Activated T-helper 1 cell treated with anti-CD3 and anti-CD28 coated beads, Interleukin-12 subunit alpha, Interleukin-12 subunit beta, Interleukin-2, Interleukin-4 antibody, amounts not matched to agents 30 ng/mL and 10 ng/mL and 1 ng/mL, durations not matched to agents 14 hours and 24 hours and 36 hours (primary cell): ENCODE measurements at regions of chr20 and their contacts with region 1.

Region 1: GRCh38 chr20:57698117-57698866 is 11.5 kb downstream of the PMEPA1 start:
- DNase-seq: peak; percentile 8
- H3K4me3 Mint-ChIP-seq: peak overlapping the region; percentile 35
- H3K27ac Mint-ChIP-seq: no peak overlapping the region
- H3K4me1 Mint-ChIP-seq: peaks cover 19% of the 10 kb centered on the region
- H3K27me3 Mint-ChIP-seq: peaks cover 12% of the 10 kb centered on the region

Region 2: GRCh38 chr20:57709931-57710799 is 11.9 kb after region 1 on chr20 and contains the start of gene PMEPA1:
- intact Hi-C with region 1: loop called (anchors 1 kb)
- DNase-seq: peak; percentile 79
- H3K4me3 Mint-ChIP-seq: peak within 1 kb of the TSS; percentile 87
- H3K27ac Mint-ChIP-seq: peak within 1 kb of the TSS; percentile 77
- H3K4me1 Mint-ChIP-seq: peaks cover 15% of the 10 kb centered on the region
- H3K27me3 Mint-ChIP-seq: peaks cover 39% of the 10 kb centered on the region
- total RNA-seq, gene PMEPA1: 0.57 and 0.66 TPM in 2 replicates

Region 3: GRCh38 chr20:57718490-57719271 is 20.4 kb after region 1 on chr20:
- intact Hi-C with region 1: loop called (anchors 1 kb)
- DNase-seq: peak; percentile 78
- H3K4me3 Mint-ChIP-seq: peak overlapping the region; percentile 22
- H3K27ac Mint-ChIP-seq: no peak overlapping the region
- H3K4me1 Mint-ChIP-seq: no peaks in the 10 kb centered on the region
- H3K27me3 Mint-ChIP-seq: peaks cover 23% of the 10 kb centered on the region

Region 4: DNA sequence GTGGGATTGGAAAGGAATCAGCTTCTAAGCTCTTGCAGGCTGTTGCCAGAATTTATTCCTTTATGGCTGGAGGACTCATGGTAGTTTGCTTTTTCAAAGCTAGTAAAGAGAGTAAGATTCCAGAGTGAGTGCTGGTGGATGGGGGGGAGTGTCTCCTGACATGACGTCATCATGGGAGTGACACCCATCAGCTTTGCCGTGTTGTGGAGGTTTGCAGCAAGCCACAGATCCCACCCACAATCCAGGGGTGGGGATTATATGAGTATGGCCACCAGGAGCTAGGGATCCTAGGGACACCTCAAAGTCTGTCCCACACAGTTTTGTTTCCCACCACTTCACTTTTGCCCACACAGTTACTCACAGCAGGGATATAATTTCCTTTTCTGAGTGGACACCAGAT is 40.2 kb after region 1 on chr20:
- intact Hi-C with region 1: no loop called
- DNase-seq: no peak
- H3K4me3 Mint-ChIP-seq: no peak overlapping the region
- H3K27ac Mint-ChIP-seq: no peak overlapping the region
- H3K4me1 Mint-ChIP-seq: no peaks in the 10 kb centered on the region
- H3K27me3 Mint-ChIP-seq: peaks cover 18% of the 10 kb centered on the region

Region 5: GRCh38 chr20:57748601-57749130 is 50.4 kb after region 1 on chr20:
- intact Hi-C with region 1: loop called (anchors 1 kb)
- DNase-seq: peak; percentile 6
- H3K4me3 Mint-ChIP-seq: no peak overlapping the region
- H3K27ac Mint-ChIP-seq: peak overlapping the region; percentile 18
- H3K4me1 Mint-ChIP-seq: peaks cover 12% of the 10 kb centered on the region
- H3K27me3 Mint-ChIP-seq: peaks cover 23% of the 10 kb centered on the region